ENCODE measurements at regions of chr3 and their contacts with region 1.

Region 1: GRCh38 chr3:12484198-12484974 is at the start of gene TSEN2:
- DNase-seq: peak; percentile 96
- H3K4me3 ChIP-seq: peak within 1 kb of the TSS; percentile 58 to 75 (median 62)
- H3K27ac ChIP-seq: peak within 1 kb of the TSS; percentile 80 to 91 (median 87)
- H3K4me1 ChIP-seq: peaks cover 9 to 50% (median 28%) of the 10 kb centered on the region in 4 donors
- H3K27me3 ChIP-seq: no peaks in the 10 kb centered on the region
- CTCF ChIP-seq: peak in 3 of 5 experiments; percentile 7 to 21 (median 12)
- EP300 ChIP-seq: no peak
- POLR2A ChIP-seq: peak; percentile 93
- total RNA-seq, gene TSEN2: 20.9 to 47.6 (median 30.1) TPM

Region 2: GRCh38 chr3:12120374-12121140 is 363.8 kb before region 1 on chr3:
- in situ Hi-C with region 1: loop called in 2 of 4 experiments (anchors 10 to 25 kb)
- intact Hi-C with region 1: no loop called
- DNase-seq: no peak
- H3K4me3 ChIP-seq: no peak overlapping the region
- H3K27ac ChIP-seq: no peak overlapping the region
- H3K4me1 ChIP-seq: no peaks in the 10 kb centered on the region
- H3K27me3 ChIP-seq: peaks cover 12% of the 10 kb centered on the region
- CTCF ChIP-seq: no peak
- EP300 ChIP-seq: no peak
- POLR2A ChIP-seq: no peak

Region 3: GRCh38 chr3:12294885-12295580 is 189.4 kb before region 1 on chr3:
- in situ Hi-C with region 1: loop called in 1 of 4 experiments (anchors 10 kb)
- intact Hi-C with region 1: no loop called
- DNase-seq: no peak
- H3K4me3 ChIP-seq: no peak overlapping the region
- H3K27ac ChIP-seq: peak overlapping the region in 2 of 4 donors; percentile 26 to 33
- H3K4me1 ChIP-seq: peaks cover 0 to 39% (median 7%) of the 10 kb centered on the region in 4 donors
- H3K27me3 ChIP-seq: no peaks in the 10 kb centered on the region
- CTCF ChIP-seq: no peak
- EP300 ChIP-seq: no peak
- POLR2A ChIP-seq: no peak

Measured in transverse colon (tissue), 4 donors.